Natural killer cell (primary cell): ENCODE measurements at regions of chr10 and their contacts with region 1.

Region 1: DNA sequence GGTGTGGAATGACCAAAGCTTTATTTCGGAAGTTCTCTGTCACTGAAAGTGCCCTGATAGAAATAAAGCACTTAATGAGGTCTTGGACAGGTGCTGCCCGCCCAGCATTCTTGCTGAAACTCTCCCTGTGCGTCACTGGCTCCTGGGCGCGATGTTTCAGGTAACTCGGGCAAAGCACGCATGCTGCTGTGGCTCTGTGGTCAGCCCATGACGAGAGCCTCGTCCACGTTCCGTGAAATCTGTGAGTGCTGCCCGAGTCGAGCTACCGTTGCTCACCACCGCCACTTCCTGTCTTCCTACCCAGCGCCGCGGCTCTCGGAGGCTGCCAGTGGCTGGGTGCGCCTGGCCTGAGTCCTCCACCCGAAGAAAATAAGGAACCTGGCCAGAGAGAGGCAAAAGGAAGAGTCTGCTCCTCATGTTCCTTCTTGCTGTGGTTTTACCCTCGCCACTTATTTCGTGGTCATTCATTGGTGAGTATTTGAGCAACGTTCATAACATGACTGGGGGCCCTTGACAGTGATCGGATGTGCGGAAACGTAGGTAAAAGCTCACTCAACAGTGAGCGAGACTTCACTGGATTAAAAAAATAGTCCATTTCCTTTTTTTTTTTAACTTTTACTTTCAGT is 95.5 kb downstream of the MAP3K8 start:
- DNase-seq: peak; percentile 80 to 90
- ATAC-seq: peak; percentile 71 to 90 (median 86)
- H3K4me3 ChIP-seq: peak overlapping the region; percentile 46
- H3K4me3 Mint-ChIP-seq: peak overlapping the region; percentile 82
- H3K27ac ChIP-seq: peak overlapping the region; percentile 97
- H3K27ac Mint-ChIP-seq: peak overlapping the region; percentile 95 to 99
- H3K4me1 ChIP-seq: peaks cover 87% of the 10 kb centered on the region
- H3K4me1 Mint-ChIP-seq: peaks cover 76% of the 10 kb centered on the region in 2 donors
- H3K27me3 ChIP-seq: no peaks in the 10 kb centered on the region
- H3K27me3 Mint-ChIP-seq: no peaks in the 10 kb centered on the region
- CTCF ChIP-seq: no peak

Region 2: DNA sequence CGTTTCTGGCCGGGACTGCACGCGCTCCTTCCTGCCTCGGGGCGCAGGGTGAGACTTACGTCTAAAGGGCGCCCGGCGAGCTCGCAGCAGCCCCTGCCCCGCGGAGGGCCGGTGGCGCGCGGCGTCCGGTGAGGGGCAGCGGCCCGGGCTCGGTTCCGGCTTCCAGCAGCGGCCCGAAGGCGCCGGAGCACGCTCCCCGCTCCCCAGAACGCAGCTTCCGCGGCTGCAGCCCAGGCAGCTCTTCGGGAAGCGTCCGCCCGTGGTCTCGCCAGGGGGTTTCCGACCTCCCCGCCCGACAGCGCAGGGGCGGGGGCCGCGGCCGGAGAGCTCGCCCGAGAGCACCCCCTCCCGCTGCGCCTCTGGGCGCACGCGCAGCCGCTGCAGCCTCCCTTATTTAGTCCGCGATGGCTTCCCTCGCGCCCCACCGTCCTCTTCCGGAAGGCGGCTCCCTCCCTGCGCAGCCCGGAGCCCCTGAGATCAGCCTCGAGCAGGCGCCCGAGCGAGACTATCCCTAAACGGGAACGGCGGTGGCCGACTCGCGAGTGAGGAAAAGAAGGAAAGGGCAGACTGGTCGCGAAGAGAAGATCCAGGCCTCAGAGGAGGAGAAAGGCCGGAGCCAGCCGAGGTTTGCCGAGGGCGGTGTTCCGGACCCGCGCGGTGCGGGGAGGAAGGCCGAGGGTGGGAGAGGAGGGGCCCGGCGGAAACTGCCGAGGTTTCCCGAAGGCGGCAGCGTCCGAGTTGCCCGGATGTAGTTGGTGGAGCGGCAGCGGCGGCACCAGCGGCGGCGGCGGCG is 1996.9 kb before region 1 on chr10 and contains the start of gene WAC:
- intact Hi-C with region 1: loop called (anchors 5 kb)
- DNase-seq: peak; percentile 97 to 98
- ATAC-seq: peak; percentile 77 to 92 (median 81)
- H3K4me3 ChIP-seq: peak within 1 kb of the TSS; percentile 83
- H3K4me3 Mint-ChIP-seq: peak within 1 kb of the TSS; percentile 100
- H3K27ac ChIP-seq: peak within 1 kb of the TSS; percentile 97
- H3K27ac Mint-ChIP-seq: peak within 1 kb of the TSS; percentile 100
- H3K4me1 ChIP-seq: peaks cover 18% of the 10 kb centered on the region
- H3K4me1 Mint-ChIP-seq: peaks cover 59 to 81% of the 10 kb centered on the region in 2 donors
- H3K27me3 ChIP-seq: no peaks in the 10 kb centered on the region
- H3K27me3 Mint-ChIP-seq: no peaks in the 10 kb centered on the region
- CTCF ChIP-seq: no peak
- total RNA-seq, gene WAC: 225 to 245 (median 226) TPM

Region 3: DNA sequence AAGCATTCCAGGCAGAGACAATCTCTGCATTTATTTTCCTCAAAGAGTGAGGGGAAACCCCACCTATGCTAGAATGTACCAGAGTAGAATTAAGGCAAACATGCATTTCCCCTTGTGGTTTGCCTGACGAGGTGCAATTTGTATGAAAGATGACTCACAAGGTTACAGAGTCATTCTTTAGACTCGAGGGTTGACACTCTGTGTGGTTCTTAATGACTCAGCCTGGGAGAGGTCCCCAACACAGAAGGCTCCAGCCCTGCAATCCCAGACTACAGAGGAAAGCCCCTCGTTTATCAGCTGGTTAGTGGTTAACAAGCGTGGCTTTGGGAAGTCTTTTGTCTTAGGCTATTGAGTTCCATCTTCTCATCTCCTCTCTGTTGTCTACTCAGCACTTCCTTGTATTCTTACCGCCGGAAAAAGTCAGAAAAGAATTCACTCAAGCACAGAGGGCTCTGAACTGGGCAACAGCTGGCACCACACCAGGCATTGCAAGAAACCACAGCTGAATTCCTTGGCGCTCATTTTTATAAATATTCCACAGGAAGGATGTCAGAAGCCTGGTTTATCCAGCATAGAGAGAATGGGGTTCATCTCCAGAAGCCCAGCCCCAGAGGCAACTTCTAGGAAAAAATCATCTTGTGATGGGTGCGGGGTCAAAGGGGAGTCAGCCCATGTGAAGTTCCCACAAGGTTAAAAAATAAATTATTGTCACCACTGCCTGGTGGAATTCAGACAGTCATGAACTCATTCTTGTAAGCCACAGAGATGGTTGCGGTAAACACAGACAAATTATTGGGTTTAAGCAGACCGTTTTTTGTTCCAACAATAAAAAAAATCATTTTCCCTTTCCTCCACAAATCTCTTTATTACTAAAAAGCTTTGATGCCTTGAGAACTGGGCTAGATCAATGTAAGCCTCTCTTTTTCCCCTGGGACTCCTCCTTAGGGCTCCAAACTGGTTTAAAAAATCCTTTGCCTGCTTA is 870.2 kb before region 1 on chr10:
- intact Hi-C with region 1: loop called (anchors 2 kb)
- DNase-seq: peak; percentile 65 to 91
- ATAC-seq: peak; percentile 85 to 97 (median 93)
- H3K4me3 ChIP-seq: no peak overlapping the region
- H3K4me3 Mint-ChIP-seq: peak overlapping the region; percentile 82
- H3K27ac ChIP-seq: peak overlapping the region; percentile 81
- H3K27ac Mint-ChIP-seq: peak overlapping the region; percentile 86 to 92
- H3K4me1 ChIP-seq: peaks cover 38% of the 10 kb centered on the region
- H3K4me1 Mint-ChIP-seq: peaks cover 55 to 67% of the 10 kb centered on the region in 2 donors
- H3K27me3 ChIP-seq: no peaks in the 10 kb centered on the region
- H3K27me3 Mint-ChIP-seq: no peaks in the 10 kb centered on the region
- CTCF ChIP-seq: no peak

Region 4: DNA sequence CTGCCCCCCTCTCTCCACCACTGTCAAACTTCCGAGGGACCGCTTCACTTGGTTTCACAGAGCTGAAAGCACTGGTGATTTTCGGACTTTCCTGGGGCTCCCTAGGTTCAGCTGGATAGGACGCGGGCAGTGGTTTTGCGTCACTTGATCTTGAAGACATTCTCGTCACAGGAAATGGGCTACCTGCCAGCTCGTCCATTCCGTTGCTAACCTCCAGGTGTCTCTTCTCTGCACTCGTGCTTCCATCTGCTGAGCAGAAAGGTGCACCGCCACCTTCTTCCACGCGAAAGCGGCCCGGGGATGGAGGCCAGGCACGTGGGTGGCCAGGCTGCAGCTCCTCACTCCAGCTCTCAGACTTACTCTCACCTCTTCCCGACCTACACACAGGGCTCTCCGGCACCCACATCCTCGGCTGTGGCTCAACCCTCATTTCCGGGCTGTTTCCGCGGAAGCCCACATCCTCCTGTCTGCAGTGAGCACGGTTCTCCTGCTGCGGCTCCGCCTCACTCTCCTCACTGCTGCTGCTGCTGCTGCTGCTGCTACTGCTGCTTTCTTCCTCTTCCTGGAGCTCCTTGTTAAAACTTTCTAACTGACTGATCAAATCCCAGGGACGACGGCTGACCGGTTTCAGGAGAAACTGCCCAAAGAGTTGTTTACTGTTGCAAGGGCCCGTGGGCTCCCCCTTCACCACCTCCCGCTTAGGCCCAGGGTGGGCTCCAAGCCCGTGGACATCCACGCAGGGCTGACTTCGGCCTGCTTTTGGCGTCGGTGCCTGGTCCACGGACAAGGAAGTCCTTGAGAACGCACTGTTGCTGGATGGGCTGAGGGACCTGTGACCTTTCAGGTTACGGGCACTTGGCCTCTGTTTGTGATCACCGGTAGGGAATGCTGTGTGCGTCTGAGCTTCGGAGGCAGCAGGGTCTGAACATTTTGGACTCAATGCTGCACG is 502.2 kb before region 1 on chr10:
- intact Hi-C with region 1: loop called (anchors 5 kb)
- DNase-seq: peak; percentile 90 to 95
- ATAC-seq: peak; percentile 84 to 94 (median 90)
- H3K4me3 ChIP-seq: peak overlapping the region; percentile 25
- H3K4me3 Mint-ChIP-seq: peak overlapping the region; percentile 82
- H3K27ac ChIP-seq: peak overlapping the region; percentile 30
- H3K27ac Mint-ChIP-seq: peak overlapping the region; percentile 87 to 92
- H3K4me1 ChIP-seq: peaks cover 34% of the 10 kb centered on the region
- H3K4me1 Mint-ChIP-seq: peaks cover 45% of the 10 kb centered on the region in 2 donors
- H3K27me3 ChIP-seq: peaks cover 34% of the 10 kb centered on the region
- H3K27me3 Mint-ChIP-seq: peaks cover 39 to 64% of the 10 kb centered on the region in 2 donors
- CTCF ChIP-seq: no peak

Region 5: DNA sequence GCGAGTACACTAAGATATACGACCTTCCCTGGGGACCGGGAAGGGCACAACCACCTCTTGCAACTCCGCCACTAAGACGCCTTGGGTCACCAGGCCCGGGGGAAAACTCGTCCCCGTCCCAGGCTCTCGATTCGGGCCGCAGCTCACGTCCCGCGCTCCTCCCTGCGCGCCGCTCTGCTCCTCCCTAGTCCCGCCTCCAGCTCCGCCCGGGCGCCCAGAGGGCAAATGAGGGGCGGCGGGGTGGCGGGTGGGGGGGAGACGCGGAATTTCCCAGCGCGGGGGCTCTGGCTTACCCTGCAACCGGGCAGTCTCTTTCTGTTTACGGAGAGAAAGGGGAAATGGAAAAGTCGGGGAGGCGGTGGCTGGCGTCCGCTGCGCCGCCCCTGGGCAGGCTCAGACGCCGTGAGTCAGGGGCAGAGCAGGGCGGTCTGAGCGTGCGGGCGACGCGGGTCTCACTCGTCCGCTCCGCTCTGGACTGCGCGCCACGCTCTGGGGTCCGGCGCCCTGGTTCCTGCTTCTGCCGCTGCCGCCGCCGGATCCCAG is 95.7 kb before region 1 on chr10 and contains the start of gene MAP3K8:
- intact Hi-C with region 1: loop called (anchors 1 kb)
- DNase-seq: peak; percentile 86 to 93
- ATAC-seq: peak; percentile 69 to 90 (median 81)
- H3K4me3 ChIP-seq: peak within 1 kb of the TSS; percentile 98
- H3K4me3 Mint-ChIP-seq: peak within 1 kb of the TSS; percentile 89
- H3K27ac ChIP-seq: peak within 1 kb of the TSS; percentile 97
- H3K27ac Mint-ChIP-seq: peak within 1 kb of the TSS; percentile 93 to 98
- H3K4me1 ChIP-seq: peaks cover 27% of the 10 kb centered on the region
- H3K4me1 Mint-ChIP-seq: peaks cover 49 to 51% of the 10 kb centered on the region in 2 donors
- H3K27me3 ChIP-seq: no peaks in the 10 kb centered on the region
- H3K27me3 Mint-ChIP-seq: no peaks in the 10 kb centered on the region
- CTCF ChIP-seq: no peak
- total RNA-seq, gene MAP3K8: 200 to 244 (median 236) TPM

Region 6: DNA sequence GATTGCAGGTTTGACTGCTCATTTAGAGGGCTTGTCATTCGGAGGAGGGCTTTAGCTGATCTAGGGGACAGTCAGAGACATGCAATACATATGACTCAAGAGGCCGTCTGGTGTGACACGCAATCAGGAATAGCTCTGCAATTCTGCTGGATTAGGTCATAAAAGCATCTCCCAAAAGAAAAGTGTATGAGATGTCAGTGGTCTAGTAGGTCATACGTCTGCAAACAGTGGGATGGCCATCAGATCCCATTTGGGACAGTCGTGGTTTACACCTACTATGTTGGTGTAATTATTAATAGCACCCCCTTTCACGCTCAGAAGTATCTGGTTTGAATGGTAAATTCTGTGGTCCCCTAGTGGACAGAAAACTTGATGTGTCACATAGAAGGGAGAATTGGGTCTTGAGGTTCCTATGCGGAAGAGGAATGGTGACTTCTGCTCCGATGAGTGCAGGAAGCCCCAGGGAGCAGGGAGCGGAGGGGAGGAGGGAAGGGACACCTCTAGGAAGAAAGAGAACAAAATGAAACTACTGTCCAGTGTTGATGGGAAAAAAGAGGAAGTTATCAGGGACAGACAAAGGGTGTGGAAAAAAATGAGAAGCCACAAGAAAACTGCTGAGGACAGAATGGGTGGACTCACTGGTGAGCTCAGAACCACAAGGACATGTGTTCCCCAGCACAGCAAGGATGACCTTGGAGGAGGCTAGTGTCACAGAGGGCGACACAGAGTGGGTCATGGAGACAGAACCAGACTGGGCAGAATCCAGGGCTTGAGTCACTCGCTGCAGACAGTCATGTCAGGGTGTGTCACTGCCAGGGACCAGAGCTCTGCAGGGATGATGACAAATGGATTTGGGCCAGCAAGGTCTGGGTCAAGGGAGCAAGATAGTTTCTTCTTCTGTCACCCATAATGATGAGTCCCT is 35.6 kb before region 1 on chr10:
- intact Hi-C with region 1: loop called (anchors 5 kb)
- DNase-seq: peak; percentile 21 to 27
- ATAC-seq: peak; percentile 45 to 77 (median 53)
- H3K4me3 ChIP-seq: no peak overlapping the region
- H3K4me3 Mint-ChIP-seq: peak overlapping the region; percentile 71
- H3K27ac ChIP-seq: peak overlapping the region; percentile 24
- H3K27ac Mint-ChIP-seq: peak overlapping the region; percentile 74 to 79
- H3K4me1 ChIP-seq: peaks cover 89% of the 10 kb centered on the region
- H3K4me1 Mint-ChIP-seq: peaks cover 85 to 96% of the 10 kb centered on the region in 2 donors
- H3K27me3 ChIP-seq: no peaks in the 10 kb centered on the region
- H3K27me3 Mint-ChIP-seq: no peaks in the 10 kb centered on the region
- CTCF ChIP-seq: no peak

Region 7: DNA sequence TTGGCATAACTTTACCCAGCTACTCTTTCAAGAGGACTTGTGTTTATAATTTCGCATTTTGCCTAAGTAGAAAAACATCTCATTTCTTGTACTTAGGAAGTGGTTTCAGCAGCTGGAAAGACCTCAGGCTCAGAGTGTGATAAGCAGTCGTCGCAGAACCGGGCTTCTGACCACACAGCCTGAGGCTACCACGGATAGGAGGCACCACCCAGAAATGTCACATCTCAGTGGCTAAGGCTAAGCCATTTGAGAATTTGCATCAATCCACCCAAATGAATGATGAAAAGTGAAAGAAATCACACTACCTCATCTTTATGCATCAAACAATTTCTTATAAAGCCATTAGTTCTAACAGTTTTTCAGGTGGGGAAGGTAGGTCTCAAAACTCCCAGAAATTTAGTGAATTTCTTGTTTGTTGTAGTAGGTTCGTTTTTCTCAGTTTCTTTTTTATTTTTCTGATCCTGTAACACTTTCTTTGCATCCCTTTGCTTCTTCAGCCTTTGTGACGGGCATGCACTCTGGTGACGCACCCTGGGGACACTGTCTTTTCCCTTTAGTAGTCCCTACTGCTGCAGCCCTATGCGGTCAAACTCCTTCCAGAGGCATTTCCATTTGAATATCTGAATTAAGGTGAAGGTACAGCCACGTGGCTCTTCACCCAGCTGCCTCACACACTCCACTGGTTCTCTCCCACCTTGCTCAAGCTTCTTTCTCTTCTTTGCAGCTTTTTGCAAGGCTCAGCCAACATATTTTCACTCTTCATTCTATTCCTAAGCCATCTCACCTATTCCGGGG is 27.0 kb before region 1 on chr10:
- intact Hi-C with region 1: loop called (anchors 1 kb)
- DNase-seq: peak; percentile 60 to 77
- ATAC-seq: peak; percentile 72 to 92 (median 91)
- H3K4me3 ChIP-seq: peak overlapping the region; percentile 26
- H3K4me3 Mint-ChIP-seq: peak overlapping the region; percentile 77
- H3K27ac ChIP-seq: peak overlapping the region; percentile 90
- H3K27ac Mint-ChIP-seq: peak overlapping the region; percentile 85 to 92
- H3K4me1 ChIP-seq: peaks cover 77% of the 10 kb centered on the region
- H3K4me1 Mint-ChIP-seq: peaks cover 91 to 94% of the 10 kb centered on the region in 2 donors
- H3K27me3 ChIP-seq: no peaks in the 10 kb centered on the region
- H3K27me3 Mint-ChIP-seq: no peaks in the 10 kb centered on the region
- CTCF ChIP-seq: no peak